PC-9 (cell line): ENCODE measurements at regions of chr5 and their contacts with region 1.

Region 1: GRCh38 chr5:57298295-57298984 is 124.6 kb downstream of the GPBP1 start:
- DNase-seq: peak; percentile 74 to 80
- H3K4me3 ChIP-seq: no peak overlapping the region
- H3K27ac ChIP-seq: peak overlapping the region; percentile 48
- H3K4me1 ChIP-seq: peaks cover 11% of the 10 kb centered on the region; the same call in 1 of the 2 replicates
- H3K27me3 ChIP-seq: no peaks in the 10 kb centered on the region
- CTCF ChIP-seq: peak; percentile 86

Region 2: DNA sequence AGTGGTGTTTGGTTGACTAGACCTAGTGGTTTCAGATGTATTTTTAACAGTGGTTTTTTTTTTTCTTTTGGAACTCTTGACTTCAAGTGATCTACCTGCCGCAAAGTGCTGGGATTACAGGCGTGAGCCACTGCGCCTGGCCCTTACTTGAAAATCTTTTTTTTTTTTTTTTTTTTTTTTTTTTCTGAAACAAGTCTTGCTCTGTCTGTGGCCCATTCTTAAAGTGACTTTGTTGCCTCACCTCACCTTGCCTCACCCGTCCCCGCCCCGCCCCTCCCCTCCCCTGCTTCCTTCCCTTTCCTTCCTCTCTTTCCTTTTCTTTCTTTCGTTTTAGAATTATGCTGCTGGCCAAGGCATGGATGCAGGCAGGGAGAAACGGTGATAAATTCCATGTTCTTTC is 98.6 kb before region 1 on chr5:
- CTCF ChIA-PET with region 1: no interaction called
- POLR2A ChIA-PET with region 1: no interaction called
- intact Hi-C with region 1: no loop called
- DNase-seq: no peak
- H3K4me3 ChIP-seq: no peak overlapping the region
- H3K27ac ChIP-seq: no peak overlapping the region
- H3K4me1 ChIP-seq: peaks cover 8% of the 10 kb centered on the region
- H3K27me3 ChIP-seq: no peaks in the 10 kb centered on the region
- CTCF ChIP-seq: no peak

Region 3: GRCh38 chr5:57327561-57328394 is 29.3 kb after region 1 on chr5:
- CTCF ChIA-PET with region 1: no interaction called
- POLR2A ChIA-PET with region 1: no interaction called
- intact Hi-C with region 1: no loop called
- DNase-seq: peak; percentile 73 to 96
- H3K4me3 ChIP-seq: 0 out of 2 replicates have a peak overlapping the region, but pooled peaks have one; percentile 12
- H3K27ac ChIP-seq: peak overlapping the region; percentile 79
- H3K4me1 ChIP-seq: peaks cover 21% of the 10 kb centered on the region
- H3K27me3 ChIP-seq: no peaks in the 10 kb centered on the region
- CTCF ChIP-seq: no peak

Region 4: GRCh38 chr5:57338068-57338892 is 39.8 kb after region 1 on chr5:
- CTCF ChIA-PET with region 1: no interaction called
- POLR2A ChIA-PET with region 1: no interaction called
- intact Hi-C with region 1: loop called (anchors 5 kb)
- DNase-seq: peak; percentile 31 to 72
- H3K4me3 ChIP-seq: no peak overlapping the region
- H3K27ac ChIP-seq: peak overlapping the region; percentile 67
- H3K4me1 ChIP-seq: peaks cover 37% of the 10 kb centered on the region
- H3K27me3 ChIP-seq: no peaks in the 10 kb centered on the region
- CTCF ChIP-seq: peak; percentile 50

Region 5: GRCh38 chr5:57435701-57436134 is 137.3 kb after region 1 on chr5:
- CTCF ChIA-PET with region 1: no interaction called
- POLR2A ChIA-PET with region 1: no interaction called
- intact Hi-C with region 1: loop called (anchors 2 kb)
- DNase-seq: peak; percentile 58 to 99
- H3K4me3 ChIP-seq: no peak overlapping the region
- H3K27ac ChIP-seq: peak overlapping the region; percentile 99
- H3K4me1 ChIP-seq: peaks cover 42% of the 10 kb centered on the region
- H3K27me3 ChIP-seq: no peaks in the 10 kb centered on the region
- CTCF ChIP-seq: no peak

Region 6: DNA sequence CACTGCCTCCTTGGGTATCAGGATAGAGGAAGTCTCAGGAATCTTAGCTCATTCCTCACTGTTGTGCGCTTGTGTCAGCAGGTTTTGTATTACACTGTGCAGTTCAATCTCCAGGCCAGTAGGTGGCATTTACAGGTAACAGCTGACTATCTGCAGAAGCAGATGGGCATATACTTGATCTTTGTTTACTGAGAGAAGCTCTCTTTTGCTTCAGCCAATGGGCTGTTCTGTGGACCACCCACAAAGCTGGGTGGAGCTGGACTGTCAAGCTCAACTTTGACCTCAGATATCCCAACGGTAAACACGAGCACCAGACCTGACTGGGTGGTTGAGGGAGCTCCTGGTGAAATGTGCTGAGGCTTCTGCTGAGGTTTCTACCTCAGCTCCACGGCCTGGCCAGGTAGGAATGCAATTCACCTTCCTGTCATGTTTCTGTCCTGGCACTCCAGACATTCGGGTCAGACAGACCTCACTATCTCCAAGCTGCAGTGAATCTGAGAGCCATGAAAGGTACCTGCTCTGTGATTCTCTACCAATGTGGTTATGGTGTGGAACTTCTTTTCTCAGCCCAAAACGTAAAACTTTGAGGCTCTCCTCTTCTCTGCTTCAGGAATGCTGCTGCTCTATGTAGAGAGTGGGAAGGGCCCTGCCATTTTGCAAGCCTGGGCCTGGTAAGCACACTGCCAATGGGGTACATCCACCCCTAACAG is 352.1 kb after region 1 on chr5:
- CTCF ChIA-PET with region 1: interaction called, 5 read pairs
- POLR2A ChIA-PET with region 1: no interaction called
- intact Hi-C with region 1: loop called (anchors 1 kb)
- DNase-seq: peak in 1 of 2 experiments; percentile 70
- H3K4me3 ChIP-seq: no peak overlapping the region
- H3K27ac ChIP-seq: no peak overlapping the region
- H3K4me1 ChIP-seq: no peaks in the 10 kb centered on the region
- H3K27me3 ChIP-seq: no peaks in the 10 kb centered on the region
- CTCF ChIP-seq: peak; percentile 59

Region 7: DNA sequence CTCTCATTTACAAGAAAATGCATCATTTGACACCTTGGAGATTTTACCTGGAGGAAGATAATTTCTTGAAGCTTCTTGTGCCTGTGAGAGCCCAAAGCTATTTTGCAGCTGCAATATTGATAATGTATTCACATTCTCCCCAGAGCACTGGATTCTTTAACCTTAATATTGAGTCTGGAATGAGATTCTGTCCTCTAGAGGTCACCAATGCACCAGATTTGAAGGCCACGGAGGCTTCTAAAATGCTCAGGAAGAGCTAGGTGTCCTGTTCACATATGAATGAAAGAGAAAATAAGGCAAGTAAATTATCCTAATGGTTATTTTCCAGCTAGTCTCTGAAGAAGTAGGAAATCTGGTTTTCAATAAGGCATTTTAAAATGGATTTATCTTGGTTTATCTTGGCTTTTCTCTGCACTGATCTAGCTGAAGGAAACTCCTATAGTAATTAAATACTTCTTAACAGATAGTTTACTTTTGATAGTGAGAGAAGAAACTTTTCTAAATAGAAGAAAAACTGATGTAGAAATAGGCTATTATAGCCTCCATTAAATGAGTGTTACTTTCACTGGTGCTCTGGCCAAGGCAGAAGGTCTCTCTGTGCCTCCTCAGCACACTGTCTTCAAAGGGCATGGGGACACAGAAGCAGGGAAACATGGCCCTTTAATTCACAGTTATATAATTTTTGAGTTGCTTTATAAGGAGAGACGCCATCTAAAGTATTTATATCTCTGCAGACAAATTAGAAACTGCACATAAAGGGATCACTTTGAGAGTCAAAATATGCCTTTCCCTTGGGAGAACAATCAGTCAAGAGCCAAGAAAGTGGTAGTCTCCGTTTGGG is 481.2 kb after region 1 on chr5:
- CTCF ChIA-PET with region 1: interaction called, 5 read pairs
- POLR2A ChIA-PET with region 1: interaction called, 5 read pairs
- intact Hi-C with region 1: loop called (anchors 1 kb)
- DNase-seq: peak; percentile 59 to 73
- H3K4me3 ChIP-seq: no peak overlapping the region
- H3K27ac ChIP-seq: peak overlapping the region; percentile 55
- H3K4me1 ChIP-seq: peaks cover 29% of the 10 kb centered on the region
- H3K27me3 ChIP-seq: no peaks in the 10 kb centered on the region
- CTCF ChIP-seq: peak; percentile 77

Region 8: DNA sequence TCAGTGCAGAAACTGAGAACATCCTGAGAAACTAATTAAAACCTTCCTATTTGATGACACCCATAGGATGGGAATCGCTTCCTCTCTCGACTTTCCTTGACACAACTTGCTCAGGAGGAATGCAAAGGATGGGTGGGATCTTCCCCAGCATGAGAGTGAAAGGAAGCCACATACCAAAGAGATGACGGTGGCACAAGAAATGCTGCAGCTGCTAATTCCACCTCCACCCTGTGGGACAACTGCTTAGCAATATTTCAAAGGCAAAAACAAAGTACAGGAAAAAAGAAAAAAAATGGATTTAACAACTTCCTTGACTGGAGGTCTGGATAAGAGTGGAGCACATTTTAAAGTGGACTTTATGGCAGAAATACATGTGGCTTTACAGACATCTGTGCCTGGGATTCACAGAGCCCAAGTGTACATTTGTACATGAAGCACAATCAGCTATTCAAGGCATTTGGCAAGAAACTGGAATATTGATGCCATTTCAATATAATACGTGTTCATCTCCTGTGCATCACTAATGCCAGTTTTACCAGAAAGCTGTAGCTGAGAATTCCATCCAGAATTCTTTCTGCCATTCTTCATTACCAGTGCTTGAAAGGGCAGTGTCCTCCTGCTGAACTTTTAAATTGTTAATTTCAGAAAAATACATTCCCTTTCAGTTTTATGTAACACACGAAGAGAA is 543.4 kb after region 1 on chr5:
- CTCF ChIA-PET with region 1: interaction called, 3 read pairs
- POLR2A ChIA-PET with region 1: no interaction called
- intact Hi-C with region 1: loop called (anchors 5 kb)
- DNase-seq: peak; percentile 79 to 98
- H3K4me3 ChIP-seq: peak overlapping the region; percentile 24; the same call in 1 of the 2 replicates
- H3K27ac ChIP-seq: peak overlapping the region; percentile 98
- H3K4me1 ChIP-seq: peaks cover 66% of the 10 kb centered on the region
- H3K27me3 ChIP-seq: no peaks in the 10 kb centered on the region
- CTCF ChIP-seq: 0 out of 2 replicates have a peak, but pooled peaks have one; percentile 16

Region 9: DNA sequence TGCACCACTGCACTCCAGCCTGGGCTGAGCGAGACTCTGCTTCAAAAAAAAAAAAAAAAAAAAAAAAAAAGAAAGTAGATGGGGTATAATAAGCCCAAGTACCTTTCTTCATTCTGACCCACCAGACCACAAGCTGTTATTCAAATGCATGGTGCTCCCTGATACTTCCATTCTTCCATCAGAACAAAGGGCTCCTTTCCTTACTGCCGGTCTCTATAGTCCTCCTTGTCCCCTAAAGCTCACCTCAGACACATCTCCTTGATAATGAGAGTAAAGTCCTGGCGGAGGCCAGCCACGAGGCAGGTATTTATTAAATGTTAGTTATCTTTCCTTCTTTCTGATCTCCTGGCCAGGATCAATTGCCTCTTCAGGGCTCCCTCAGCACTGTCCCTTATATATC is 1446.9 kb after region 1 on chr5:
- CTCF ChIA-PET with region 1: interaction called, 11 read pairs
- POLR2A ChIA-PET with region 1: no interaction called
- intact Hi-C with region 1: no loop called
- DNase-seq: no peak
- H3K4me3 ChIP-seq: no peak overlapping the region
- H3K27ac ChIP-seq: no peak overlapping the region
- H3K4me1 ChIP-seq: no peaks in the 10 kb centered on the region
- H3K27me3 ChIP-seq: no peaks in the 10 kb centered on the region
- CTCF ChIP-seq: no peak